ENCODE measurements at regions of chr10 and their contacts with region 1.

Region 1: DNA sequence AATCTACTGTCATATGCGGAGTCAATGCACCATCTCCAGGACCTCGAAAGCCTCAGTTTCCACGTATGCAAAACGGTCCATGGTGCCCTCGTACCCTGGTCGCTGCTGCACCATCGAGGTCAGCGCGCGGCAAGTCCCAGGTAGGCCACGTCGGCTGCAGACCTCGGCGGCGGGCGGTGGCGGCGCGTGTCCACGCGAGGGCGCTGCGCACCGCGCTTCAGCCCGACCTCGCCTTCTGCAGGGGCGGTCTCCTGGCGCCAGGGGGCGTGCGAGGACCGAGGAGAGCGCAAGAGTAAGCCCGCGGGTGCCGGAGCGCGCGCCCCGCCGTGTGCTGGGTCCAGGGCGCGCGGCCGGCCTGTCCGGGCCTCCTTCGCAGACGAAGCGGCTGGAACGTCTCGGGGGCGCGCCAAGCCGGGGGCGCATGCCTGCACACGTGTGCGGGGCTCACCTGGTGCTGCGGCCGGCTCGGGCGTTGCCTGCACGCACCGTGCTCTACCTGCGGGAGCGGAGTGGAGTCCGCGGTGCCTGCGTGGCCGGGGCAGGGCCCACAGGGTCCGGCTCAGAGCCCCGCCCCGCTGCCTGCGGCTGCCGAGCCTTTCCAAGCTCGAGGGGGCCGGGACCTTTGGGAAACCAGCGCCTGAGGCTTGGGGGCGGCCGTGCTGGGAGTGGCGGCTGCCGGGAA is 54.0 kb downstream of the GLRX3 start:
- DNase-seq: peak; percentile 78 to 93 (median 89)
- ATAC-seq: peak; percentile 98
- H3K4me3 ChIP-seq: peak overlapping the region; percentile 13 to 54
- H3K4me3 Mint-ChIP-seq: peak overlapping the region; percentile 26
- H3K27ac ChIP-seq: no peak overlapping the region
- H3K27ac Mint-ChIP-seq: no peak overlapping the region
- H3K4me1 ChIP-seq: peaks cover 6% of the 10 kb centered on the region
- H3K4me1 Mint-ChIP-seq: peaks cover 3% of the 10 kb centered on the region
- H3K27me3 ChIP-seq: no peaks in the 10 kb centered on the region
- H3K27me3 Mint-ChIP-seq: peaks cover 15% of the 10 kb centered on the region
- CTCF ChIP-seq: peak; percentile 100

Region 2: GRCh38 chr10:130179640-130180039 is 10.6 kb before region 1 on chr10:
- CTCF ChIA-PET with region 1: interaction called, 10 read pairs
- POLR2A ChIA-PET with region 1: no interaction called
- intact Hi-C with region 1: no loop called
- DNase-seq: peak in 7 of 9 experiments; percentile 23 to 63 (median 37)
- ATAC-seq: peak; percentile 85
- H3K4me3 ChIP-seq: no peak overlapping the region
- H3K4me3 Mint-ChIP-seq: no peak overlapping the region
- H3K27ac ChIP-seq: no peak overlapping the region
- H3K27ac Mint-ChIP-seq: peak overlapping the region; percentile 41
- H3K4me1 ChIP-seq: no peaks in the 10 kb centered on the region
- H3K4me1 Mint-ChIP-seq: peaks cover 6% of the 10 kb centered on the region
- H3K27me3 ChIP-seq: no peaks in the 10 kb centered on the region
- H3K27me3 Mint-ChIP-seq: no peaks in the 10 kb centered on the region
- CTCF ChIP-seq: peak; percentile 42

Region 3: DNA sequence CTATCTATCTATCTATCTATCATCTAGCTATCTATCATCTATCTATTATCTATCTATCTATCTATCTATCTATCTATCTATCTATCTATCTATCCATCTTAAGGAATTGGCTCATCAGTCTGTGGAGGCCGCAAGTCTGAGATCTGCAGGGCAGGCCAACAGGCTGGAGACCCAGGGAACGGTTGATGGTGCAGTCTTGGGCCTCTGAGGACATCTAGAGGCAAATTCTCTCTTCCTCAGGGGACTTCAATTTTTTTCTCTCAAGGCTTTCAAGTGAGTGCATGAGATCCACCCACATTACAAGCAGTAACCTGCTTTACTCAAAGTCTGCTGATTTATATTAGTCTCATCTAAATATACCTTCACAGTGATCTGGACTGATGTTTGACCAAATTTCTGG is 143.0 kb after region 1 on chr10:
- CTCF ChIA-PET with region 1: no interaction called
- POLR2A ChIA-PET with region 1: no interaction called
- intact Hi-C with region 1: loop called in 1 of 2 experiments (anchors 2 kb)
- DNase-seq: no peak
- ATAC-seq: no peak
- H3K4me3 ChIP-seq: no peak overlapping the region
- H3K4me3 Mint-ChIP-seq: no peak overlapping the region
- H3K27ac ChIP-seq: no peak overlapping the region
- H3K27ac Mint-ChIP-seq: no peak overlapping the region
- H3K4me1 ChIP-seq: no peaks in the 10 kb centered on the region
- H3K4me1 Mint-ChIP-seq: no peaks in the 10 kb centered on the region
- H3K27me3 ChIP-seq: no peaks in the 10 kb centered on the region
- H3K27me3 Mint-ChIP-seq: no peaks in the 10 kb centered on the region
- CTCF ChIP-seq: no peak

Region 4: DNA sequence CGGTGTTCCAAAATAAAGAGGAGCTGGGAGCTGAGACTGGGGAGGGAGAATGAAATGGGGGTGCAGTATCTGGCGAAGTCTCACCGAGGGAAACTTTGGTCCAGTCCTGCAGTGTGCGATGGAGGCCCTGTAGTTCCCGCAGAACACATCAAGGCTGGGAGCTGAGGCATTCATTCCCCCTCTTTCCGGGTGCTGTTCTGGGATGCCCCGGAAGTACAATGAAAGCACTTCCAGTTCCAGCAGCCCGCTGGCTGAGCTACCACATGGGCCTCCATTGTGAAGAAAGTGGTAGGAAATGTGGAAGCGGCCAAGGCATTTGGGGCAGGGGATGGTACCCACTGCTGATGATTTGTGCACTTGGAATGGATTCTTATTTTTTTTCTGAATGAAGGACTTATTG is 506.7 kb after region 1 on chr10:
- CTCF ChIA-PET with region 1: no interaction called
- POLR2A ChIA-PET with region 1: no interaction called
- intact Hi-C with region 1: no loop called
- DNase-seq: no peak
- ATAC-seq: no peak
- H3K4me3 ChIP-seq: no peak overlapping the region
- H3K4me3 Mint-ChIP-seq: no peak overlapping the region
- H3K27ac ChIP-seq: no peak overlapping the region
- H3K27ac Mint-ChIP-seq: no peak overlapping the region
- H3K4me1 ChIP-seq: no peaks in the 10 kb centered on the region
- H3K4me1 Mint-ChIP-seq: no peaks in the 10 kb centered on the region
- H3K27me3 ChIP-seq: no peaks in the 10 kb centered on the region
- H3K27me3 Mint-ChIP-seq: peaks cover 3% of the 10 kb centered on the region
- CTCF ChIP-seq: no peak

Region 5: GRCh38 chr10:131786756-131787605 is 1596.8 kb after region 1 on chr10:
- CTCF ChIA-PET with region 1: interaction called, 3 read pairs
- POLR2A ChIA-PET with region 1: no interaction called
- intact Hi-C with region 1: loop called in 1 of 2 experiments (anchors 1 kb)
- DNase-seq: peak in 6 of 9 experiments; percentile 9 to 56 (median 26)
- ATAC-seq: no peak
- H3K4me3 ChIP-seq: no peak overlapping the region
- H3K4me3 Mint-ChIP-seq: no peak overlapping the region
- H3K27ac ChIP-seq: no peak overlapping the region
- H3K27ac Mint-ChIP-seq: no peak overlapping the region
- H3K4me1 ChIP-seq: no peaks in the 10 kb centered on the region
- H3K4me1 Mint-ChIP-seq: no peaks in the 10 kb centered on the region
- H3K27me3 ChIP-seq: no peaks in the 10 kb centered on the region
- H3K27me3 Mint-ChIP-seq: peaks cover 20% of the 10 kb centered on the region
- CTCF ChIP-seq: peak; percentile 62

Region 6: GRCh38 chr10:131874991-131875451 is 1684.8 kb after region 1 on chr10:
- CTCF ChIA-PET with region 1: no interaction called
- POLR2A ChIA-PET with region 1: no interaction called
- intact Hi-C with region 1: loop called in 1 of 2 experiments (anchors 1 kb)
- DNase-seq: peak in 7 of 9 experiments; percentile 17 to 63 (median 45)
- ATAC-seq: no peak
- H3K4me3 ChIP-seq: no peak overlapping the region
- H3K4me3 Mint-ChIP-seq: no peak overlapping the region
- H3K27ac ChIP-seq: no peak overlapping the region
- H3K27ac Mint-ChIP-seq: no peak overlapping the region
- H3K4me1 ChIP-seq: no peaks in the 10 kb centered on the region
- H3K4me1 Mint-ChIP-seq: peaks cover 3% of the 10 kb centered on the region
- H3K27me3 ChIP-seq: no peaks in the 10 kb centered on the region
- H3K27me3 Mint-ChIP-seq: peaks cover 32% of the 10 kb centered on the region
- CTCF ChIP-seq: peak; percentile 52

Region 7: GRCh38 chr10:132023092-132023811 is 1833.1 kb after region 1 on chr10:
- CTCF ChIA-PET with region 1: no interaction called
- POLR2A ChIA-PET with region 1: no interaction called
- intact Hi-C with region 1: loop called in 1 of 2 experiments (anchors 5 kb)
- DNase-seq: peak; percentile 54 to 88 (median 77)
- ATAC-seq: peak; percentile 94
- H3K4me3 ChIP-seq: no peak overlapping the region
- H3K4me3 Mint-ChIP-seq: peak overlapping the region; percentile 8
- H3K27ac ChIP-seq: no peak overlapping the region
- H3K27ac Mint-ChIP-seq: no peak overlapping the region
- H3K4me1 ChIP-seq: peaks cover 6% of the 10 kb centered on the region
- H3K4me1 Mint-ChIP-seq: peaks cover 7% of the 10 kb centered on the region
- H3K27me3 ChIP-seq: peaks cover 0 to 6% of the 10 kb centered on the region in 2 experiments
- H3K27me3 Mint-ChIP-seq: peaks cover 30% of the 10 kb centered on the region
- CTCF ChIP-seq: peak; percentile 91

Measured in CD8-positive, alpha-beta T cell (primary cell).